Breast epithelium (tissue), 4 donors: ENCODE measurements at regions of chr11 and their contacts with region 1.

Region 1: DNA sequence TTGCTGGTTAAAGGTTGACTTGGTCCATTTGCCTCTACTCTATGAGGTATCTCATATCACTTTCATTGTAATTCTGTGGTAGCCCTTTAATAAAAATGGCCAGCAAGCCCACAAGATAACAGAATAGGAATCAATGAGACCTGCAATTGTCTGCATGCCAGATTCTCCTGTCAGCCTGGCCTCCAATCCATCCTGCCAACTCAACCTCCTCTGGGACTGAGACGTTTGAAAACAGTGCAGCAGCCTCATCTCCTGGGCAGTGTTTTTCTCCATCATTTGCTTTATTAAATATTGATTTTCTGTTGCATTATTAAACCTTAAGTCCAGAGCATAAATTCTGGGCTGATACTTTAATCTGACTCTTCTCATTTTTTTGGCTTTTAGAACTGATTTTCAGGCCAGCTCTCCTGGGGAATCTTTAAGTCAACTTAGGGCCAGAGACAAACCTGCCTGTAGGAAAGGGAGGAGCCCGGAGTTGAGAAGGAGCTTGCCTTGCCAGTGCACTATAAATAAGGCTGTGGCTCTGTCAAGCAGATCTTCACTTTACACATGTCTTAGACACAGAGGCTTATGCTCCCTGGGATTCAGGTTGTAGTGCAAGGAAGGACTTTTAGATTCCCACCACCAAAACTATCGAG is 798.0 kb downstream of the NTM start:
- DNase-seq: no peak
- H3K4me3 ChIP-seq: no peak overlapping the region
- H3K27ac ChIP-seq: no peak overlapping the region
- H3K4me1 ChIP-seq: no peaks in the 10 kb centered on the region
- H3K27me3 ChIP-seq: no peaks in the 10 kb centered on the region
- CTCF ChIP-seq: no peak
- POLR2A ChIP-seq: no peak

Region 2: GRCh38 chr11:131056036-131056435 is 1112.4 kb before region 1 on chr11:
- intact Hi-C with region 1: no loop called
- DNase-seq: no peak
- H3K4me3 ChIP-seq: no peak overlapping the region
- H3K27ac ChIP-seq: no peak overlapping the region
- H3K4me1 ChIP-seq: no peaks in the 10 kb centered on the region
- H3K27me3 ChIP-seq: peaks cover 0 to 2% of the 10 kb centered on the region in 2 donors
- CTCF ChIP-seq: no peak
- POLR2A ChIP-seq: no peak

Region 3: DNA sequence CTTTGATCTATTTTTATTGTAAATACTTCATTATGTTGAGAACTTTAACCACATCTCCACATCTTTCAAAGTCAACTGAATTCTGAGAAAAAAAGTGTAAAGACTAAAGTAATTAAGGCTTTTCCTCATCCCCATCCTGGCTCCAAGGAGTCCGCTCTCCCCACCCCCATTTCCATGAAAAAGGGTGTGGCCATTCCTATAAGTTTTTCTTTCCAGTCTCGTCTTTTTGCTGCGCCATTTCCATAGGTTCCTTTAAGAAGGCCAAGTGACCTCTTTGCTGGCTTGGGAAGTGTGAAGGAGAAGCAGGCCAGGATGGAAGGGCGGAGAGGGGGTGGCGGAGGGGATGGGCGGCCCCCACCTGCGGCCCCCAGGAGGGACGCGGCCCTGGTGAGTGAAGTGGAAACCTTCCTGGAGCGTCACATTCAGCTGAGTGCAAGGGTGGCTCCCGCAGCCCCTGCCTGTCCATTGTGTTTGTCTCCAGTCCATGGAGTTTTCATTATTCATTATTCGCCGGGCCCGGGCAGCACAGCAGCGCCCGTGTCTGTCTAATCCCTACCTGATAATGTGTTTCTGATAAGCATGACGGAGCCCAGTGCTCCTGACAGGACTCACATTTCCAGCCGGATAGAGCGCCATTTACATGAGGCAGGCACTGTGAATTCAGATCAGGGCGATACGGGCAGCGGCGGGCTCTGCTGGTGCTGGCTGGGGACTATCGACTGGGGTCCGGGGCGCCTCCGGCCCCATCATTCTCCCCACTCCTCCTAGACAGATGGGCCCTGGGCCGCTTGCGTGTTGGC is 624.1 kb after region 1 on chr11:
- intact Hi-C with region 1: loop called (anchors 5 kb)
- DNase-seq: no peak
- H3K4me3 ChIP-seq: no peak overlapping the region
- H3K27ac ChIP-seq: no peak overlapping the region
- H3K4me1 ChIP-seq: no peaks in the 10 kb centered on the region
- H3K27me3 ChIP-seq: no peaks in the 10 kb centered on the region
- CTCF ChIP-seq: no peak
- POLR2A ChIP-seq: no peak